ENCODE measurements at regions of chr6 and their contacts with region 1.

Region 1: GRCh38 chr6:133568970-133569889 is 319.7 kb upstream of the TCF21 start:
- DNase-seq: peak; percentile 44 to 63 (median 52)
- ATAC-seq: peak; percentile 93
- H3K4me3 ChIP-seq: no peak overlapping the region
- H3K27ac ChIP-seq: no peak overlapping the region
- H3K4me1 ChIP-seq: no peaks in the 10 kb centered on the region; a peak in 1 of 5 replicates
- H3K27me3 ChIP-seq: no peaks in the 10 kb centered on the region; a peak in 1 of 5 replicates
- CTCF ChIP-seq: peak; percentile 71 to 85 (median 72); a peak in 5 of 6 replicates
- EP300 ChIP-seq: no peak
- POLR2A ChIP-seq: no peak
- RAD21 ChIP-seq: peak; percentile 93 to 97

Region 2: DNA sequence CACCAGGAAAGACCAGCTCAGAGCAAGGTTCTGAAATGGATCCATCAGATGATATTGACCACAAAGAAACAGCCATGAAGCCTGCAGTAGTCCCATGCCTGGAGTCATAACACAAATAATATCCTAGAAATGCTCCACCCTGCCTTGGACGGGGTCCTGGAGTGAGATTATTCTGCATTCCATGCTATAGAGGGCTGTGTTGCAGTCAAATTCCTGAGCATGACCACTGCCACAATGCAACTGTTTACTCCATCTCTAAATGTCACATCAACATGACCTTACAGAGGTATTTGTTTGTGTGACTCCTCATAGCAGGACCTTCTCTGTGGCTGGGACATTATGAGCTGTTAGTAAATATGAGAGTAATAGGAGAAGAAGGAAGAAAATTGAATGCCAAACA is 62.2 kb after region 1 on chr6:
- CTCF ChIA-PET with region 1: no interaction called
- POLR2A ChIA-PET with region 1: no interaction called
- in situ Hi-C with region 1: no loop called
- intact Hi-C with region 1: no loop called
- DNase-seq: no peak
- ATAC-seq: no peak
- H3K4me3 ChIP-seq: no peak overlapping the region
- H3K27ac ChIP-seq: no peak overlapping the region
- H3K4me1 ChIP-seq: no peaks in the 10 kb centered on the region
- H3K27me3 ChIP-seq: no peaks in the 10 kb centered on the region
- CTCF ChIP-seq: no peak
- EP300 ChIP-seq: no peak
- POLR2A ChIP-seq: no peak
- RAD21 ChIP-seq: no peak

Region 3: DNA sequence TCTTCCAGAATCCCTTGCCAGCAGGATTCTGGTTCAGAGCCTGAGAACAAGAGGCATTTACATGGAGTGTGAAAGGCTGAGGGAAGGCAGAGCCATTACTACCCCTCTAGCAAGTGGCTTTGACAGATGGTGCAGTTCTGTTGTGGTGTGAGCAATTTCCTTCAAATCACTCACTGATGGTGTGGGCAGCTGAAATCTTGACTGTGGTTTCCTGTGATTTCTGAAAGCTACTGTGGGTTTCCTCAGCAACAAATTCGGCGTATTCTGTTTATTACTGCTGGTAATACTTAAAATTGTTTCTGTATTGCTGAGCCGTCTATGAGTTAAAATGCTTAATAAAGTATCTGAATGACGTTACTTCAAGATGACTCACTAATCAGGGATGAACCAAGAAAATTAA is 138.2 kb after region 1 on chr6:
- CTCF ChIA-PET with region 1: no interaction called
- POLR2A ChIA-PET with region 1: no interaction called
- in situ Hi-C with region 1: no loop called
- intact Hi-C with region 1: loop called (anchors 10 kb)
- DNase-seq: no peak
- ATAC-seq: peak; percentile 58; the same call in 2 of the 3 replicates
- H3K4me3 ChIP-seq: no peak overlapping the region
- H3K27ac ChIP-seq: no peak overlapping the region
- H3K4me1 ChIP-seq: peaks cover 0 to 7% of the 10 kb centered on the region in 2 experiments; a peak in 2 of 5 replicates
- H3K27me3 ChIP-seq: no peaks in the 10 kb centered on the region; a peak in 2 of 5 replicates
- CTCF ChIP-seq: no peak
- EP300 ChIP-seq: no peak
- POLR2A ChIP-seq: no peak
- RAD21 ChIP-seq: no peak

Region 4: DNA sequence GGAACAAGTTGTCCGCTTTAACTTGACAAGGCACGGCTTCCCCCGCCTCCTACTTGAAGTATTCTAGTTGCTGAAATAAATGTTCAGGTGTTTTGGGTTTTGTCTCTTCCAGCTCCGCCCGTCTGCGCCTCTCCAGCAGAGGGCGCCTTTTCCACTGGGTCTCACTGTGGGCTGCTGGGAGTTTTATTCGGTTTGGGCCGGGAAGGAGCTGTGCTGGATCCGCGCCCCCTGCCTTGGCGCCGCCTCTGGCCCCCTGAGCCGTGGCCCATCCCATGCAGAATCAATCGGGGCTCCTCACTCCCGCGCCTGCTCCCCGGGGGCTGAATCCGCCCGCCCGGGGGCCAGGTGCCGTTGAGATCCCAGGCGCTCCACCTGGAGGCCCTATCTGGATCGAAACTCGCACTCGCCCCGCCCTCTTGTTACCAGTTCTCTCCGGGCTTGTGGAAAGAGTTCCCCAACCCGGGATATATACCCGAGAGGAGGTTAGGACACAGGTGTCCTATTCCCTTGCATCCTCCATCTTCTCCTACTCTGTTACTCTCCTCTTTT is 268.6 kb after region 1 on chr6:
- CTCF ChIA-PET with region 1: no interaction called
- POLR2A ChIA-PET with region 1: interaction called, 4 read pairs
- in situ Hi-C with region 1: no loop called
- intact Hi-C with region 1: loop called (anchors 1 kb)
- DNase-seq: peak; percentile 61 to 83 (median 68)
- ATAC-seq: peak; percentile 99
- H3K4me3 ChIP-seq: peak overlapping the region; percentile 67
- H3K27ac ChIP-seq: no peak overlapping the region
- H3K4me1 ChIP-seq: peaks cover 0 to 5% of the 10 kb centered on the region in 2 experiments; a peak in 2 of 5 replicates
- H3K27me3 ChIP-seq: no peaks in the 10 kb centered on the region; a peak in 1 of 5 replicates
- CTCF ChIP-seq: peak; percentile 80 to 90 (median 89)
- EP300 ChIP-seq: no peak
- POLR2A ChIP-seq: no peak
- RAD21 ChIP-seq: peak; percentile 58 to 66

Region 5: DNA sequence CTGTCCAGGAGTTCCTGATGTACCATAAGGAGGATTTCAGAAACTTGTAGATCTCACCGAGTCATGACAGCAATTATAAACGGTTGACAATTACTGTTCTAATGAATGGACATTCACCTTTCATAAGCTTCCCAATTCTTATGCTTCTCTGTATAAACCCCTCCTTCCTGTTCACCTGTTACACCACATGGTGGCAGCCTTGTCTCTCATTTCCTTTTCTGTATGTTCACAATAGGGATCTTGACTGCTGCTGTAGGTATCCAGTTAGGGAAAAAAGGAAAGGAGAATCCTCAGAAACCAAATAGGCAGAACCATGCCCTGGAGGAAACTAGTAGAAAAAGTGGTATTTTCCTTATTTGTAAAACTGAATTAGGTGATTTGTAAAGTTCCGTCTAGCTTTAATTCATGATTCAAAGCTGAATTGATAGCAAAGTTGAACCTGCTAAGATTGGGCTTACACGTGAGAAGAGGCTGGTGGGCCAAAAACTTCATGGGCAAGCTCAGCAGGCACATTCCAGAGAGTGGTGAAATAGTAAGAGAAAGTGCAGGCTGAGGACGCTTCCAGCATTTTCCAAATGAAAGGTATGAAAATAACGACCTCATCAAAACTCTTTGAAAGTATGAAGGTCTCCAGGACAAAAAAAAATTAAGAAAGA is 354.8 kb after region 1 on chr6:
- CTCF ChIA-PET with region 1: interaction called, 11 read pairs
- POLR2A ChIA-PET with region 1: no interaction called
- in situ Hi-C with region 1: loop called (anchors 5 kb)
- intact Hi-C with region 1: no loop called
- DNase-seq: peak; percentile 55 to 84 (median 65)
- ATAC-seq: peak; percentile 94
- H3K4me3 ChIP-seq: no peak overlapping the region
- H3K27ac ChIP-seq: no peak overlapping the region
- H3K4me1 ChIP-seq: no peaks in the 10 kb centered on the region
- H3K27me3 ChIP-seq: no peaks in the 10 kb centered on the region
- CTCF ChIP-seq: peak; percentile 77 to 95 (median 82)
- EP300 ChIP-seq: no peak
- POLR2A ChIP-seq: no peak
- RAD21 ChIP-seq: peak; percentile 99 to 100